ENCODE measurements at regions of chr6 and their contacts with region 1.

Region 1: GRCh38 chr6:143842902-143843676 is at the start of gene LTV1:
- DNase-seq: peak; percentile 90
- H3K4me3 Mint-ChIP-seq: peak within 1 kb of the TSS; percentile 97
- H3K27ac Mint-ChIP-seq: peak within 1 kb of the TSS; percentile 96
- H3K4me1 Mint-ChIP-seq: peaks cover 17% of the 10 kb centered on the region
- H3K27me3 Mint-ChIP-seq: no peaks in the 10 kb centered on the region
- total RNA-seq, gene LTV1: 41.2 and 44.7 TPM in 2 replicates

Region 2: DNA sequence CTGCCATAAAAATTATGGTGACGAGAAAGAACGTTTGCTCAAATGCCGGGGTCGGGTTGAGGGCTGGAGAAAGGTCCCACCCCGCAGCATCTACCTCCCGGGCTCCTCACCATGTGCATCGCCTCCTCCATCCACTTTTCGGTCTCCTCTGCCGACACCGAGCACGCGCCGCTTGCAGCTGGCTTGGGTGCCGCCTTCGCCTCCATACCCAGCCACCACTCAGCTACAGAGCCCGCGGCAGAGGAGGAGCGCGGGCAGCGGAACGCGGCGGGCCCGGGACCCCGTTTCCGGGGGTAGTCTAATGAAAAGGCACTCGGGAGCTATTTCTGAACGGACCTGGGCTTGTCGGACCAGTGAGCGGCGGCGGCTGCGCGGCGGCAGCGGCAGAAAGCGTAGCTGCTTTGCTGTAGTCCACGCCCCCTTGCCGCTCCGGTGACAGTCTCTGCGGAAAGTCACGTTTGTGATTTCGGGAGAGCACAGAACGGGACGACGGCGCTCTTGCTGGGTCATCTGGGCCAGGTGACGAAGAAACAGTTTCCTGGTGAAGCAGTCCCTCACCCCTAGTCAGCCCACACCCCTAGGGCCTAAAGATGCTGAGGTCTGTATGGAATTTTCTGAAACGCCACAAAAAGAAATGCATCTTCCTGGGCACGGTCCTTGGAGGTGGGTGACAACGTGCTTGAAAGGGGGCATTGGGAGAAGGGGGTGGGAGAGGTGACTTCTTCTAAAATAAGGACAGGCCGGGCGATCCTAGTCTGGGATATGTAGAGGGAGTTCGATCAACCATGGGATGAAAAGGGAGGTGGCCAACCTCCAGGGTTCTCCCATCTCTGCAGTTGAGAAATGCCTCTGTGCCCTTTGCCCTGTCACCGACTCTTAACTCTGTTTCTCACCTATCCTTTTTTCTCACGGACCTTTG is 392.4 kb before region 1 on chr6 and contains the starts of genes ADAT2 and PEX3:
- intact Hi-C with region 1: loop called (anchors 10 kb)
- DNase-seq: peak; percentile 93
- H3K4me3 Mint-ChIP-seq: peak within 1 kb of the TSS; percentile 94
- H3K27ac Mint-ChIP-seq: peak within 1 kb of the TSS; percentile 97
- H3K4me1 Mint-ChIP-seq: peaks cover 36% of the 10 kb centered on the region
- H3K27me3 Mint-ChIP-seq: no peaks in the 10 kb centered on the region
- total RNA-seq, gene ADAT2: 35.7 and 37.6 TPM in 2 replicates
- total RNA-seq, gene PEX3: 21.4 and 23.6 TPM in 2 replicates

Region 3: GRCh38 chr6:143677891-143678791 is 164.9 kb before region 1 on chr6 and contains the start of gene PHACTR2:
- intact Hi-C with region 1: loop called (anchors 5 kb)
- DNase-seq: peak; percentile 14
- H3K4me3 Mint-ChIP-seq: peak within 1 kb of the TSS; percentile 73
- H3K27ac Mint-ChIP-seq: no peak within 1 kb of the TSS
- H3K4me1 Mint-ChIP-seq: peaks cover 10% of the 10 kb centered on the region
- H3K27me3 Mint-ChIP-seq: peaks cover 42% of the 10 kb centered on the region
- total RNA-seq, gene PHACTR2: 41.0 and 45.4 TPM in 2 replicates

Region 4: DNA sequence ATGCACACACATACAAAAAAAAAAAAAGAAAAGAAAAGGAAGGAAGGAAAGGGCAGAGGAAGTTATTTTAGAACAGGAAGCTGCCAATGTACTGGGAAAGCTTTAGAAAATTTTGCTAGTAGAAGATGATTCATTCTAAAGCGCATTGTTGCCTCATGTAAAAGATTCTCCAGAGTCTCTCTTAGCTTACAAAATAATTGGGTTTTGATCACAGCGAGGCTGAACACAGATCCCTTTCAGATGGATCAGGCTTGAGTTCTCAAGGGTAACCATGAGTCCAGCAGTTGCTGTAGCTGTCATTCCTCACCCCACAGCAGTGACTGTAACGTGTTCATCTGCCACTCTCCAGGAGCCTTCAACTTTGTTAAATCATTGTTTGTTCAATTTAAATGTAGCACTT is 83.4 kb before region 1 on chr6:
- intact Hi-C with region 1: no loop called
- DNase-seq: no peak
- H3K4me3 Mint-ChIP-seq: no peak overlapping the region
- H3K27ac Mint-ChIP-seq: no peak overlapping the region
- H3K4me1 Mint-ChIP-seq: peaks cover 4% of the 10 kb centered on the region
- H3K27me3 Mint-ChIP-seq: no peaks in the 10 kb centered on the region

Region 5: DNA sequence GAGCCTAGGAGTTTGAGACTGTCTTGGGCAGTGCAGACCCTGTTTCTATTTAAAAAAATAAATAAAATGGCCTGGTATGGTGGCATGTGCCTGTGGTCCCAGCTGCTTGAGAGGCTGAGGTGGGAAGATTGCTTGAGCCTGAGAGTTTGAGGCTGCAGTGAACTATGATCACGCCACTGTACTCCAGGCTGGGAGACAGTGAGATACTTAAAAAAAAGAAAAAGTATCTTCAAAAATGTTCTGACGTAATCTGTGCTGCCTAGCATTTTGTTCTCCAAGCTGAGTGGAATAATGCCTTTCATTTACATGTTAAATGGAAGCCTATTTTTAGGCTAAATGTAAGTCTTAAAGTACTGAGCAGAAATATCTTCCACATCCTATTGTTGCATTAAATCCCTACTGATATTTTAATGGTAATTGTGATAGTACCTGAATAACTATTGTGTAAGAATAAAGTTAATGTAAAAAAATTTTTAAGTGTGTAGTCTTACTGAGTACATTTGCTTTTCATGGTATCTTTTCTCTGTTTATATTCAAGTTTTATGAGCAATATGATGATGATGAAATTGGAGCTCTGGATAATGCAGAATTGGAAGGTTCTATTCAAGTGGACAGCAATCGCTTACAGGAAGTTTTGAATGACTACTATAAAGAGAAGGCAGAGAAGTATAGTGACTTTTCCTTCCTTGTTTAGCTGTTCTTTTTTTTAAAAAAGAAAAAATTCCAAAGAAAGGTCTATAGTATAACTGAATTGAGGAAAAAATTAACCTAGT is 17.0 kb after region 1 on chr6:
- intact Hi-C with region 1: loop called (anchors 2 kb)
- DNase-seq: no peak
- H3K4me3 Mint-ChIP-seq: no peak overlapping the region
- H3K27ac Mint-ChIP-seq: no peak overlapping the region
- H3K4me1 Mint-ChIP-seq: peaks cover 23% of the 10 kb centered on the region
- H3K27me3 Mint-ChIP-seq: no peaks in the 10 kb centered on the region